ENCODE measurements at regions of chr15 and their contacts with region 1.

Region 1: GRCh38 chr15:33766389-33766788 is 201.9 kb upstream of the CHRM5 start:
- DNase-seq: no peak
- H3K27ac ChIP-seq: no peak overlapping the region
- CTCF ChIP-seq: no peak

Region 2: GRCh38 chr15:33788906-33789540 is 22.6 kb after region 1 on chr15:
- CTCF ChIA-PET with region 1: interaction called, 13 read pairs
- POLR2A ChIA-PET with region 1: no interaction called
- DNase-seq: no peak
- H3K27ac ChIP-seq: no peak overlapping the region
- CTCF ChIP-seq: no peak

Measured in RWPE1 (cell line).